AG04449 (cell line): ENCODE measurements at regions of chr3 and their contacts with region 1.

Region 1: GRCh38 chr3:159988617-159989271 is at the start of gene IL12A:
- DNase-seq: no peak
- H3K4me3 ChIP-seq: peak within 1 kb of the TSS; percentile 66
- CTCF ChIP-seq: peak; percentile 98

Region 2: DNA sequence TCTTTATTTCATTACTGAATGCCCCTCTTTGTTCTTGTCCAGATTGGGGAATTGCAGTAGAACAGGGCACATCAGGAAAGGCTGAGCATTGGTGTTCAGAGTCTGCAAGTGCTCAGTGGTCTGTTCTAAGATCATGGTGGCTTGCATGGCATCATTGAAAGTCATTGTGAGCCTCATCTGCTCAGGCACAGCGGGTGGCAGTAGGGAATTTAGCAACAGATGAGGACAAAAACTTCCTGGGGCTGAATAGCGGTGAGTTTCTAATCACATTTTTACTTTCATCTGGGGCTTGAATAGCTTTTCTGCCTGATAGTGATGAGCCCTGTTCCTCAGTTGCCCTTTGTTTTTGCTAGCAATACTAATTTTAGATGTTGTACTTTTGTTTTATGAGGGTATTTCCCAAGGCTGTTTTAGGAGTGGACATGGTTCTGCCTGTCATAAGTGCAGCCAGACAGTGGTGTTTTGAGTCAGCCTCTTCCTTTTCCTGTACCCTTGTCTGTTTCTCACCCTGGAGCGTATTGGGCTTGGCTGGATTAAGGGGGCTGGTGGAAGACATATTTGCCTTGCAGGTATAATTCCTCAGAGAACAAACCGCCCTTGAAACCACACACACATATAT is 127.3 kb before region 1 on chr3:
- CTCF ChIA-PET with region 1: interaction called, 12 read pairs
- POLR2A ChIA-PET with region 1: no interaction called
- DNase-seq: no peak
- H3K4me3 ChIP-seq: no peak overlapping the region
- CTCF ChIP-seq: no peak

Region 3: GRCh38 chr3:159910991-159911663 is 77.6 kb before region 1 on chr3:
- CTCF ChIA-PET with region 1: interaction called, 15 read pairs
- POLR2A ChIA-PET with region 1: interaction called, 3 read pairs
- DNase-seq: no peak
- H3K4me3 ChIP-seq: no peak overlapping the region
- CTCF ChIP-seq: no peak

Region 4: DNA sequence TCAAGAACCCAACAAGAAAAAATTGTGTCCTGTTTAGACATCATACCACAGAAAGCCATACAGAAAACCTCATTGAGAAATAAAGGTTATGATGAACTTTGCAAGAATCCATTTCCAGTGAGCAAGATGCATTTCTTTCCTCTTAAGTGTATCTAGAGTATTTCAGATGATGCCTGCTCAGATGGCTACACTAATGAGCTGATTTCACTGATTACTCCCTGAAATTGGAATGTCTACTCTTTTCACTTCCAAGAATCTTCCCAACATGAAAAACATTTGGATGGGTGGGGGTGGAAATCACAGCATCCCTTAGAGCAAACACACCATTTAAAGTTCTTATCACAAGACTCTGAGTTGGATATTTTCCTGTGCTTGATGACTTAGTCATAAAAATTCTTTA is 41.5 kb before region 1 on chr3:
- CTCF ChIA-PET with region 1: interaction called, 42 read pairs
- POLR2A ChIA-PET with region 1: no interaction called
- DNase-seq: peak; percentile 98
- H3K4me3 ChIP-seq: no peak overlapping the region
- CTCF ChIP-seq: no peak

Region 5: DNA sequence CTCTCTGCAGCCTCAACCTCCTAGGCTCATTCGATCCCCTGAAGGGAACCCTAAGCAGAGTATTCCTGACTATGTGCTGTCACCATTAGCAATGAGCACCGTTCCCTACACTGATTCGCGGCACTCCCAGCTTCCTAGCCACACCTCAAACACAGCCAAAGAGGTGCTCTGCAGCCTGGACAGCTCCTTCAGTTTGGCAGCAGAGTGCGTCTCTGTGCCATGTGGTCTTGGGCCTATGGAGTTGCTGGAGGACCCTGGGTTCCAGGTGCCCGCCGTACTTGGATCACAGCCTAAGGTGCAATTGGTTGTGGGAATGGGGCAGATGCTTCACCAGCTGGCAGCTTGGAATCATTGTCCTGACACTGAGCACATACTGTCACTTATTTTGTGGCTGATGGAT is 17.4 kb before region 1 on chr3:
- CTCF ChIA-PET with region 1: interaction called, 126 read pairs
- POLR2A ChIA-PET with region 1: no interaction called
- DNase-seq: no peak
- H3K4me3 ChIP-seq: no peak overlapping the region
- CTCF ChIP-seq: no peak